ENCODE measurements at regions of chr18 and their contacts with region 1.

Region 1: DNA sequence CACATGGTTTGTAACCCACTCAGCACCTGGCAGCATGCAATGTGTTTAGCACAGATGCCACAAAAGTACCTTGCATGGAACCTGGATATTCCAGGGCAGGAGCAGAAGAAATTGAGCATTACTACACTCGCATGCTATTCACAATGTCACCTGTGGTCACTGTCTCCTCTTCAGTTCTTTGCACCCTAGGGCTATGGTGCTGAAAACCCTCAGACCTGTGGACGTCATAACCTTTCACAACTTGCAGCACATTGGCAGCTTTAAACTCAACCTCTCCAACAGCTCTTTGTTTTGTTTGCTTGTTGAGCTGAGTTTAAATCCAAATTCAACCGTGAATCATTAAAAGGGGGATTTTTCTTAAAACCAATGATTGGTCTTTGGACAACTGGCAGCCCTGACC is 344.0 kb upstream of the ZNF521 start:
- DNase-seq: no peak
- H3K4me3 ChIP-seq: no peak overlapping the region
- H3K27ac ChIP-seq: no peak overlapping the region
- H3K4me1 ChIP-seq: no peaks in the 10 kb centered on the region
- H3K27me3 ChIP-seq: no peaks in the 10 kb centered on the region
- CTCF ChIP-seq: no peak
- EP300 ChIP-seq: no peak
- POLR2A ChIP-seq: no peak
- RAD21 ChIP-seq: no peak

Region 2: GRCh38 chr18:25630682-25631081 is 65.3 kb before region 1 on chr18:
- CTCF ChIA-PET with region 1: no interaction called
- POLR2A ChIA-PET with region 1: no interaction called
- DNase-seq: no peak
- H3K4me3 ChIP-seq: no peak overlapping the region
- H3K27ac ChIP-seq: no peak overlapping the region
- H3K4me1 ChIP-seq: no peaks in the 10 kb centered on the region
- H3K27me3 ChIP-seq: no peaks in the 10 kb centered on the region
- CTCF ChIP-seq: no peak
- EP300 ChIP-seq: no peak
- POLR2A ChIP-seq: no peak
- RAD21 ChIP-seq: no peak

Region 3: DNA sequence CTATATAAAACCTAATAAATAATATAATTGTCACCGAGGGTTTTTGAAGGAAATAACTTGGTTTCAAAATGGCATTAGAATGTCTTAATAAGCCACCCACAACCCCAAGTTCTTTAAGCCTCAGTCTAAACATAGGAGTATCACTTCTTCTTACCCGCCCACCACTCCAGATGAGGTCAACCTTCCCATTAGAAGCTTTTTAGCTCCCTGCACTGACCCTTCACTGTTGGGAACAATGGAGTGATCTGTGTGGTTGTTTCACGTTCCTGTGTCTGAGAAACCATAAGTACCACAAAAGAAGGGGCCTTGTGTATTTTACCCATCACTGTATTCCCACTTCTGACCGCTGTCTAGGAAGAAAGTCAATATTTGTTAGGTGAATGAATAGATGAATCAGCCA is 17.8 kb before region 1 on chr18:
- CTCF ChIA-PET with region 1: interaction called, 16 read pairs
- POLR2A ChIA-PET with region 1: no interaction called
- DNase-seq: no peak
- H3K4me3 ChIP-seq: no peak overlapping the region
- H3K27ac ChIP-seq: no peak overlapping the region
- H3K4me1 ChIP-seq: peaks cover 8 to 25% (median 15%) of the 10 kb centered on the region in 4 experiments
- H3K27me3 ChIP-seq: no peaks in the 10 kb centered on the region
- CTCF ChIP-seq: no peak
- EP300 ChIP-seq: no peak
- POLR2A ChIP-seq: no peak
- RAD21 ChIP-seq: no peak

Region 4: DNA sequence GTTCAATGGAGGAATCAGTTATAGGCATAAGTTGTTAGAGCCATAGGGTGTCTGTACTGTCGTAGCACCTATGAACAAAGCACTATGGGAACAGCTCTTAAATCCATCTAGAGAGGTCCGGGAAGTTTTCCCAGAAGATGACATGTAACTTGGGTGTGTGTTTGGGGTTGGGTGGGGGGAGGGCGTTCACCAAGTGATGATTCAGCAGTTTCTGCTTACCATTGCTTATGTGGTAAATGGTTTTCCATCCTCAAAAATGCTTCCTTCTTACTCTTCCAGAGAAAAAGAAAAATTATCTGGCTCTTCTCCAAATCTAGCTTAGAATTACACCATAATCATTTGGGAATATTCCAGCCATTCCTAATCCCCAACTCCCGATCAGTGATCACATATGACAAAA is 17.1 kb after region 1 on chr18:
- CTCF ChIA-PET with region 1: no interaction called
- POLR2A ChIA-PET with region 1: no interaction called
- DNase-seq: no peak
- H3K4me3 ChIP-seq: no peak overlapping the region
- H3K27ac ChIP-seq: no peak overlapping the region
- H3K4me1 ChIP-seq: no peaks in the 10 kb centered on the region
- H3K27me3 ChIP-seq: no peaks in the 10 kb centered on the region
- CTCF ChIP-seq: no peak
- EP300 ChIP-seq: no peak
- POLR2A ChIP-seq: no peak
- RAD21 ChIP-seq: no peak

Measured in H1 (cell line).